Caco-2 (cell line): ENCODE measurements at regions of chr4 and their contacts with region 1.

Region 1: GRCh38 chr4:153318696-153319320 is 25.7 kb upstream of the MND1 start:
- DNase-seq: peak in 1 of 2 experiments; percentile 56
- H3K4me3 ChIP-seq: no peak overlapping the region
- H3K4me3 Mint-ChIP-seq: no peak overlapping the region
- H3K27ac Mint-ChIP-seq: no peak overlapping the region
- H3K4me1 ChIP-seq: no peaks in the 10 kb centered on the region
- H3K4me1 Mint-ChIP-seq: no peaks in the 10 kb centered on the region
- H3K27me3 ChIP-seq: no peaks in the 10 kb centered on the region
- H3K27me3 Mint-ChIP-seq: no peaks in the 10 kb centered on the region
- CTCF ChIP-seq: peak; percentile 38 to 77

Region 2: GRCh38 chr4:153142700-153143438 is 175.9 kb before region 1 on chr4:
- CTCF ChIA-PET with region 1: interaction called, 8 read pairs
- POLR2A ChIA-PET with region 1: no interaction called
- intact Hi-C with region 1: loop called (anchors 1 kb)
- DNase-seq: peak; percentile 74 to 78
- H3K4me3 ChIP-seq: no peak overlapping the region
- H3K4me3 Mint-ChIP-seq: no peak overlapping the region
- H3K27ac Mint-ChIP-seq: peak overlapping the region; percentile 53
- H3K4me1 ChIP-seq: peaks cover 8% of the 10 kb centered on the region
- H3K4me1 Mint-ChIP-seq: peaks cover 13% of the 10 kb centered on the region
- H3K27me3 ChIP-seq: no peaks in the 10 kb centered on the region
- H3K27me3 Mint-ChIP-seq: no peaks in the 10 kb centered on the region
- CTCF ChIP-seq: peak; percentile 73 to 78

Region 3: GRCh38 chr4:153232768-153233167 is 86.0 kb before region 1 on chr4:
- CTCF ChIA-PET with region 1: interaction called, 7 read pairs
- POLR2A ChIA-PET with region 1: no interaction called
- intact Hi-C with region 1: loop called (anchors 1 kb)
- DNase-seq: peak; percentile 68 to 71
- H3K4me3 ChIP-seq: no peak overlapping the region
- H3K4me3 Mint-ChIP-seq: no peak overlapping the region
- H3K27ac Mint-ChIP-seq: peak overlapping the region; percentile 40
- H3K4me1 ChIP-seq: peaks cover 8% of the 10 kb centered on the region
- H3K4me1 Mint-ChIP-seq: peaks cover 20% of the 10 kb centered on the region
- H3K27me3 ChIP-seq: no peaks in the 10 kb centered on the region
- H3K27me3 Mint-ChIP-seq: no peaks in the 10 kb centered on the region
- CTCF ChIP-seq: peak; percentile 48